Endothelial cell of umbilical vein (primary cell): ENCODE measurements at regions of chr3 and their contacts with region 1.

Region 1: DNA sequence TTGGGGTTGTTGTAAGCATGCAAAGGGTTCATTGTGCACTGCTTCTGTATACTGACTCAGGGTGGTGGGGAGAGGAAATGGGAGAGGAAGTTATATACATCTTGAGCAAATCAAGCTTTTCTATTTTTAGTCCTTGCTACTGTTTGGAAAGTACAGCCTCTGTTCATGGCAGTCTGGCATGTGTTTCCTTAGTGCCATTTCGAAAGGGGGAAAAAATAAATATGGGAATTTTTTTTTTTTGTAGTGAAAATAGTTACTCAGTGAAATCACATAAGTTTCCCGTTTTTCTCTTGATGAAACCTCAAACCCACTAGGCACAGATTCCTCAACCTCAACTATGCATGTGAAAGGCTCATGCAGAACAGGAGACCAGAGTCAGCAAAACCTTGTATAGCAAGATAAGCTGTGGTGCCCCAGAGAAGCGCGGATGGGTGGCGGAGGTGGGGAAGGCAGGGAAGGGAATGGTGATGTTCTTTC is 353.3 kb downstream of the LPP start:
- DNase-seq: peak; percentile 83
- H3K4me3 ChIP-seq: no peak overlapping the region
- H3K27ac ChIP-seq: peak overlapping the region; percentile 33
- H3K4me1 ChIP-seq: peaks cover 25% of the 10 kb centered on the region
- H3K27me3 ChIP-seq: no peaks in the 10 kb centered on the region
- CTCF ChIP-seq: no peak
- POLR2A ChIP-seq: no peak

Region 2: DNA sequence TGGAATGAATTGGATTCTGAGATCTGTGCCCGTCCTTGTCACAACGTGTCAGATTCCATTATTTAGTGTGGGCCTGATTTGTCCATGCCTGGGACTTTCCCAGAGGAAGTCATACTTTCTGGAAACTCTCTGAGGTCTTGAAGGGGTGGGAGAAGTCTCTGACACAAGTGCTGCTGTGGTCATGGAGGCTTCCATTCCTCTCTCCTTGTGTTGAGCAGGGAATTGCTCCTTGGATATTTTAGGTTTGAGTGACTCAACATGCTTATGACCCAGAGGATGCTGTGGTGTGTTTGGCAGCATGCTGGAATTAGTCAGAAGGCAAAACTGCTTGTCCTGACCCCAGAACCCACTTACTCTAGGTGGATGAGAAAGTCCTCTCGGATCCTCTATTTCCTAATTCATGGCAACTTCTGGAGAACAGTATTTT is 221.2 kb before region 1 on chr3:
- CTCF ChIA-PET with region 1: no interaction called
- POLR2A ChIA-PET with region 1: no interaction called
- dilution Hi-C with region 1: no loop called
- intact Hi-C with region 1: no loop called
- DNase-seq: peak; percentile 78
- H3K4me3 ChIP-seq: no peak overlapping the region
- H3K27ac ChIP-seq: peak overlapping the region; percentile 73
- H3K4me1 ChIP-seq: peaks cover 12% of the 10 kb centered on the region
- H3K27me3 ChIP-seq: no peaks in the 10 kb centered on the region
- CTCF ChIP-seq: no peak
- POLR2A ChIP-seq: no peak

Region 3: GRCh38 chr3:188439080-188439479 is 68.2 kb before region 1 on chr3:
- CTCF ChIA-PET with region 1: no interaction called
- POLR2A ChIA-PET with region 1: no interaction called
- dilution Hi-C with region 1: no loop called
- intact Hi-C with region 1: loop called (anchors 1 kb)
- DNase-seq: peak; percentile 85
- H3K4me3 ChIP-seq: no peak overlapping the region
- H3K27ac ChIP-seq: peak overlapping the region; percentile 86
- H3K4me1 ChIP-seq: peaks cover 36% of the 10 kb centered on the region
- H3K27me3 ChIP-seq: no peaks in the 10 kb centered on the region
- CTCF ChIP-seq: no peak
- POLR2A ChIP-seq: no peak

Region 4: DNA sequence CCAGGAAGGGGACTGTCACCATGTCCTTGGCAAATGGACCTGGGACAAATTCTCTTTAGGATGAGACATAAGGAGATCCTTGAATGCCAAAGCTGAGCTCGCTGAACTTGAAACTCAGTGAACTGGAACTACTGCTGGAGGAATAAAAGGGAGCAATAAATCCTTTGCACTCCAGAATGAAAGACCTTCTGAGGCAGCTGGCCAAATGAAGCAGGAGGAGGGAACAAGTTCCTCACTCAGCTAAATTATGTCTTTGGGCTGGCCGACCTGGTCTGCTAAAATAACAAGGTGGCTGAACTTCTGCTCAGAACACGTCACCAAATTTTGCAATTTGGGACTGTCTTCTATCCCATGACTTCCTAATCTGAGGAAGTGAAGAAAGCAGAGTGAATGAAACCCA is 38.6 kb before region 1 on chr3:
- CTCF ChIA-PET with region 1: no interaction called
- POLR2A ChIA-PET with region 1: no interaction called
- dilution Hi-C with region 1: no loop called
- intact Hi-C with region 1: loop called (anchors 2 kb)
- DNase-seq: no peak
- H3K4me3 ChIP-seq: no peak overlapping the region
- H3K27ac ChIP-seq: peak overlapping the region; percentile 28
- H3K4me1 ChIP-seq: peaks cover 16% of the 10 kb centered on the region
- H3K27me3 ChIP-seq: no peaks in the 10 kb centered on the region
- CTCF ChIP-seq: no peak
- POLR2A ChIP-seq: no peak

Region 5: DNA sequence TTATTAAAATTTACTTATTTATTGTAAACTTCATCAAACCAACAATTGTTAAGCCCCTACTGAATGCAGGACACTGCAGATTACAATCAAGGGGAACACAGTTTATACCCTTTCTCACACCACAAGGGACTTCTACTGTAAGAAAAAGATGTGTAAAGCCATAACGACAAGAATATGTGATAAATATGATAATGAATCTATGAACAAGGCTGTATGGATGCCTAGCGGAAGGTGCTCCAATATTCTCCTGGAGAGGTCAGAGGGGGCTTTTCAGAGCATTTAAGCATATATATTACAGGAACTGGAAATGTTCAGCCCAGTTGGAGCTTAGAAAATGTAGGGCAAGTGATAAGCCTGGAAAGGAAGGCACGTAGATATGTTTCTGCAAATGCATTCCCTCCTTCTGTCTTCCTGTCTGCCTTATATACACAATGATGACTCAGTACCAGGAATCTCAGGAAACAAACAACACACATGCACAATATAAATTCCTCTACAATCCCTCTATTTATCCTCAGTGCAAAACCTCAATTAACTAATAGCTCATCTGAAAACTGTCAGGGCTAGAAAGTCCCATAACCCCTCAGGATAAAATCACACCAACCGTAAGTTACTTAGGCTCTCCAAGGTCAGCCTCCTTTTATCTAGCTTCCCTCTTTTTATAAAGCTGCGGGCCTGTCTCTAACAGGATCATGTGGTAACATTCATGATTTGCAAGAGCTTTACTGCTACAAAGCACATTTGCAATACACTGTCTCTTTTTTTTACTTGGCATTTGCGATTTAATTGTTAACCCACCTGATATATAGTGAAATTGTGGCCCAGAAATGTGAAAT is 39.8 kb after region 1 on chr3:
- CTCF ChIA-PET with region 1: no interaction called
- POLR2A ChIA-PET with region 1: no interaction called
- dilution Hi-C with region 1: no loop called
- intact Hi-C with region 1: loop called (anchors 1 kb)
- DNase-seq: peak; percentile 87
- H3K4me3 ChIP-seq: peak overlapping the region in 1 of 3 experiments; percentile 22
- H3K27ac ChIP-seq: peak overlapping the region; percentile 86
- H3K4me1 ChIP-seq: peaks cover 34% of the 10 kb centered on the region
- H3K27me3 ChIP-seq: no peaks in the 10 kb centered on the region
- CTCF ChIP-seq: no peak
- POLR2A ChIP-seq: no peak

Region 6: DNA sequence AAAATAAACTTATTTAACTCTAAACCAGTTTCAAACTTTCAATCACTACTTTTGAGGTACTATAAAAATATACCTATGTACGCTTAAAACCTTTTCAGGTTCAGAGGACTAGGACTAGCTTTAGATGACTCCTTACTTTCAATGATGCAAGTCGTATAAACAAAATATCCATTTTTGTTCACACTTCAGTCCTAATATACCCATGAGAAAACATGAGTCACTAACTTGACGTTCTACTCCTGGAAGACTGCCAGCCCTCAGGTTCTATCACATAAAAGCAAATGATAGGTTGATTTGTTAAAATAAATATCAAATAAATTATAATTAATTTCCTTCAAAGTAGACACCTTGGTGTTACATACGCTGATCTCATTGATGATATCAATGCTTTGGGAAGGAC is 1624.0 kb after region 1 on chr3:
- CTCF ChIA-PET with region 1: no interaction called
- POLR2A ChIA-PET with region 1: no interaction called
- dilution Hi-C with region 1: no loop called
- intact Hi-C with region 1: no loop called
- DNase-seq: peak; percentile 50
- H3K4me3 ChIP-seq: no peak overlapping the region
- H3K27ac ChIP-seq: no peak overlapping the region
- H3K4me1 ChIP-seq: no peaks in the 10 kb centered on the region
- H3K27me3 ChIP-seq: peaks cover 3 to 4% of the 10 kb centered on the region in 2 experiments
- CTCF ChIP-seq: no peak
- POLR2A ChIP-seq: no peak